ENCODE measurements at regions of chr7 and their contacts with region 1.

Region 1: GRCh38 chr7:138396251-138397070 is 63.6 kb upstream of the TRIM24 start:
- DNase-seq: peak; percentile 93 to 95
- H3K4me3 ChIP-seq: no peak overlapping the region
- H3K4me3 Mint-ChIP-seq: peak overlapping the region; percentile 67
- H3K27ac Mint-ChIP-seq: peak overlapping the region; percentile 97
- H3K4me1 ChIP-seq: peaks cover 15% of the 10 kb centered on the region
- H3K4me1 Mint-ChIP-seq: peaks cover 17% of the 10 kb centered on the region
- H3K27me3 ChIP-seq: no peaks in the 10 kb centered on the region
- H3K27me3 Mint-ChIP-seq: no peaks in the 10 kb centered on the region
- CTCF ChIP-seq: no peak

Region 2: DNA sequence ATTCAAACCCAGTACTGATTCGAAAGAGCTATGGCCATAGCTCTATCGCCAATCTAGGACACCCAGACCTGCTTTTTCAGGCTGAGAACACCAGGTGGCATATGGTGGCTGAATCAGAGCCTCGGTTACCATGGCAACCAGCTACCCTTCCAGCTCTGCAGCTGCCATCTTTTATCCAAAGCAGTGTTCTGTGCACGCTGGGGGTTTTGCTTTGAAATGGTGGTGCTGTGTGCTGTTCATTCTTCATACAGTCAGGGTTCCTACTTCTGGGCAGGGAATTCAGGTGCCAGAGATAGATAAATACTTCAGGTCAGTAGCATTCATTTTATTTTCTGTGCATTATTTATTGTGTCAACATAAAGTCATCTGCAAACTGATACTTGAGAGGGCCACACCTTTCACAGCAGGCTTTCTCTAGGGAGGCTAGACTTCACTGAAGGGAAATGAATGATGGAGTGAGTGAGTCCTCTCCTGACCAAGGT is 234.8 kb before region 1 on chr7:
- CTCF ChIA-PET with region 1: no interaction called
- POLR2A ChIA-PET with region 1: no interaction called
- intact Hi-C with region 1: loop called (anchors 2 kb)
- DNase-seq: peak; percentile 83 to 92
- H3K4me3 ChIP-seq: no peak overlapping the region
- H3K4me3 Mint-ChIP-seq: no peak overlapping the region
- H3K27ac Mint-ChIP-seq: no peak overlapping the region
- H3K4me1 ChIP-seq: peaks cover 14% of the 10 kb centered on the region
- H3K4me1 Mint-ChIP-seq: peaks cover 12% of the 10 kb centered on the region
- H3K27me3 ChIP-seq: no peaks in the 10 kb centered on the region
- H3K27me3 Mint-ChIP-seq: no peaks in the 10 kb centered on the region
- CTCF ChIP-seq: peak; percentile 53 to 70

Region 3: DNA sequence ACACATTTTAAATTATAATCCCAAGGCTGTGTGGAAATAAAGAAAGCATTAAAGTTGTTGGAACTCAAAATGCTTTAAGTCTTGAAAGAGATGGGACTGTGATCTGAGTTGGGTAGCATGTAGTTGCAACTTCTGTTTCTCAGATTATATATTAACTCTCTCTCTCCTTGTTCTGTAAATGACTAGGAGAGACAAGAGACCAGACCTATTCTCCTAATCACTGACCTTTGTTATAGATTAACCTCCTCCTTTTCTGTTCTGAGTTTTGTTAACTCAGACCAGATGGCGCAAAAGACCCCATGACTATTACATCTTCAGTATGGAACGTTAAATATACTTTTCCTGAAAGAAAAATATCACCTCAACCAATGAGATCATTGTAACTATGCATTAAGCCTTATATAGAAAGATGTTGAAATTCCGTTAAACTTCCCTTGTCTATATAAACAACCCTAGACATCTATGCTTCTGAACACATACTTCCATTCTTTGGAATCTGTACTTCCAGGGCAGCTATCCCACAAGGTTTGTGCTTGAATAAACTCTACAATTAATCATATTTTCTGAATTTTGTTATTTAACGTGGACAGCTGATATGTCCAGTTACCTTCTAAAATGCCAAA is 79.9 kb before region 1 on chr7:
- CTCF ChIA-PET with region 1: no interaction called
- POLR2A ChIA-PET with region 1: no interaction called
- intact Hi-C with region 1: loop called (anchors 1 kb)
- DNase-seq: peak in 1 of 2 experiments; percentile 44
- H3K4me3 ChIP-seq: no peak overlapping the region
- H3K4me3 Mint-ChIP-seq: no peak overlapping the region
- H3K27ac Mint-ChIP-seq: no peak overlapping the region
- H3K4me1 ChIP-seq: peaks cover 23% of the 10 kb centered on the region
- H3K4me1 Mint-ChIP-seq: no peaks in the 10 kb centered on the region
- H3K27me3 ChIP-seq: no peaks in the 10 kb centered on the region
- H3K27me3 Mint-ChIP-seq: no peaks in the 10 kb centered on the region
- CTCF ChIP-seq: no peak

Region 4: GRCh38 chr7:138417078-138417700 is 20.7 kb after region 1 on chr7:
- CTCF ChIA-PET with region 1: no interaction called
- POLR2A ChIA-PET with region 1: no interaction called
- intact Hi-C with region 1: loop called (anchors 1 kb)
- DNase-seq: no peak
- H3K4me3 ChIP-seq: no peak overlapping the region
- H3K4me3 Mint-ChIP-seq: no peak overlapping the region
- H3K27ac Mint-ChIP-seq: no peak overlapping the region
- H3K4me1 ChIP-seq: peaks cover 20% of the 10 kb centered on the region
- H3K4me1 Mint-ChIP-seq: peaks cover 20% of the 10 kb centered on the region
- H3K27me3 ChIP-seq: no peaks in the 10 kb centered on the region; the same call in 1 of the 2 replicates
- H3K27me3 Mint-ChIP-seq: no peaks in the 10 kb centered on the region
- CTCF ChIP-seq: no peak

Measured in Caco-2 (cell line).